Caco-2 (cell line): ENCODE measurements at regions of chr1 and their contacts with region 1.

Region 1: GRCh38 chr1:55021965-55022546 is 17.3 kb upstream of the PCSK9 start:
- DNase-seq: peak; percentile 84 to 88
- H3K4me3 ChIP-seq: no peak overlapping the region
- H3K4me3 Mint-ChIP-seq: no peak overlapping the region
- H3K27ac Mint-ChIP-seq: peak overlapping the region; percentile 34
- H3K4me1 ChIP-seq: peaks cover 7% of the 10 kb centered on the region
- H3K4me1 Mint-ChIP-seq: peaks cover 29% of the 10 kb centered on the region
- H3K27me3 ChIP-seq: no peaks in the 10 kb centered on the region
- H3K27me3 Mint-ChIP-seq: no peaks in the 10 kb centered on the region
- CTCF ChIP-seq: peak; percentile 76 to 80

Region 2: DNA sequence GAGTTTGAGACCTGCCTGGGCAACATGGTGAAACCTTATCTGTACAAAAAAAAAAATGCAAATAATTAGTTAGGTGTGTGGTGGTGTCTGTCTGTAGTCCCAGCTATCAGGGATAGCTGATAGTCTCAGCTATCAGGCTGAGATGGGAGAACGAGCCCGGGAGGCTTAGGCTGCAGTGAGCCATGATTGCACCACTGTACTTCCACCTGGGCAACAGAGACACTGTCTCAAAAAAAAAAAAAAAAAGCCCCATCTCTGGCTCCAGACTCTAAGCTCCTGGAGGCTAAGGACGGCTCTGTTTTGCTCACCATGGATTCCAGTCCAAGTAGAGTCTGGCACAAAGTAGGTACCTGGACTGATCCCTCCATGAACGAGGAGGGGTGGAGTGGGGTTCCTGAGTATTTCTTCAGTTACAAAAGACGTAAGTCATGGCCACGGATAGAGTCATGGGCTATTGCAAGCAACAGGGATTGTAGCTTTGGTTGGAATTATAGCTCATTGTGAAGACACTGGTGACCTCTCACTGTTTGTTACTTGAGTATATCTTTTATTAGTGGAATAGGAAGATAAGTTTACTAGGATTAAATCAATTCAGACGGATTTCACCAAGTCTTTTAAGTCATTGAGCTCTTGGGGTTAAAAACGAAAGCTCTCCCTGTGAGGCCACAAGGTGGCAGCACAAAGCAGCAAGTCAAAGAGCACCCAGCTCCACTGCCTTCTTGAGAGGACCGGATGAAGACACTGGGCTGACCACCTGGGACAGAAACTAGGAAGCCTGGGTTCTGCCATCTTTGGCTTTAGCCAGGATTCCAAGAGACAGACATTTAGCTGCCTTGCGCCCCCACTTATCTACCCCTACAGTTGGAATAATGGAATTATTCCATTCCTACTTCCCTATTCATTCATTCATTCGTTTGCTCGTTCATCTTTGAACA is 77.2 kb before region 1 on chr1:
- CTCF ChIA-PET with region 1: interaction called, 37 read pairs
- POLR2A ChIA-PET with region 1: interaction called, 3 read pairs
- intact Hi-C with region 1: loop called (anchors 1 kb)
- DNase-seq: peak; percentile 60 to 61
- H3K4me3 ChIP-seq: no peak overlapping the region
- H3K4me3 Mint-ChIP-seq: no peak overlapping the region
- H3K27ac Mint-ChIP-seq: no peak overlapping the region
- H3K4me1 ChIP-seq: peaks cover 7% of the 10 kb centered on the region; the same call in 1 of the 2 replicates
- H3K4me1 Mint-ChIP-seq: peaks cover 1% of the 10 kb centered on the region
- H3K27me3 ChIP-seq: no peaks in the 10 kb centered on the region
- H3K27me3 Mint-ChIP-seq: no peaks in the 10 kb centered on the region
- CTCF ChIP-seq: peak; percentile 51 to 53

Region 3: GRCh38 chr1:54950369-54951163 is 71.5 kb before region 1 on chr1:
- CTCF ChIA-PET with region 1: interaction called, 37 read pairs
- POLR2A ChIA-PET with region 1: interaction called, 4 read pairs
- intact Hi-C with region 1: loop called (anchors 1 kb)
- DNase-seq: peak; percentile 59 to 74
- H3K4me3 ChIP-seq: no peak overlapping the region
- H3K4me3 Mint-ChIP-seq: no peak overlapping the region
- H3K27ac Mint-ChIP-seq: peak overlapping the region; percentile 66
- H3K4me1 ChIP-seq: no peaks in the 10 kb centered on the region; the same call in 1 of the 2 replicates
- H3K4me1 Mint-ChIP-seq: peaks cover 18% of the 10 kb centered on the region
- H3K27me3 ChIP-seq: no peaks in the 10 kb centered on the region
- H3K27me3 Mint-ChIP-seq: no peaks in the 10 kb centered on the region
- CTCF ChIP-seq: peak; percentile 44 to 57

Region 4: GRCh38 chr1:54996359-54996868 is 25.6 kb before region 1 on chr1:
- CTCF ChIA-PET with region 1: interaction called, 7 read pairs
- POLR2A ChIA-PET with region 1: no interaction called
- intact Hi-C with region 1: loop called (anchors 1 kb)
- DNase-seq: peak; percentile 67 to 74
- H3K4me3 ChIP-seq: no peak overlapping the region
- H3K4me3 Mint-ChIP-seq: no peak overlapping the region
- H3K27ac Mint-ChIP-seq: no peak overlapping the region
- H3K4me1 ChIP-seq: no peaks in the 10 kb centered on the region
- H3K4me1 Mint-ChIP-seq: peaks cover 8% of the 10 kb centered on the region
- H3K27me3 ChIP-seq: no peaks in the 10 kb centered on the region
- H3K27me3 Mint-ChIP-seq: peaks cover 4% of the 10 kb centered on the region
- CTCF ChIP-seq: peak; percentile 60 to 66

Region 5: DNA sequence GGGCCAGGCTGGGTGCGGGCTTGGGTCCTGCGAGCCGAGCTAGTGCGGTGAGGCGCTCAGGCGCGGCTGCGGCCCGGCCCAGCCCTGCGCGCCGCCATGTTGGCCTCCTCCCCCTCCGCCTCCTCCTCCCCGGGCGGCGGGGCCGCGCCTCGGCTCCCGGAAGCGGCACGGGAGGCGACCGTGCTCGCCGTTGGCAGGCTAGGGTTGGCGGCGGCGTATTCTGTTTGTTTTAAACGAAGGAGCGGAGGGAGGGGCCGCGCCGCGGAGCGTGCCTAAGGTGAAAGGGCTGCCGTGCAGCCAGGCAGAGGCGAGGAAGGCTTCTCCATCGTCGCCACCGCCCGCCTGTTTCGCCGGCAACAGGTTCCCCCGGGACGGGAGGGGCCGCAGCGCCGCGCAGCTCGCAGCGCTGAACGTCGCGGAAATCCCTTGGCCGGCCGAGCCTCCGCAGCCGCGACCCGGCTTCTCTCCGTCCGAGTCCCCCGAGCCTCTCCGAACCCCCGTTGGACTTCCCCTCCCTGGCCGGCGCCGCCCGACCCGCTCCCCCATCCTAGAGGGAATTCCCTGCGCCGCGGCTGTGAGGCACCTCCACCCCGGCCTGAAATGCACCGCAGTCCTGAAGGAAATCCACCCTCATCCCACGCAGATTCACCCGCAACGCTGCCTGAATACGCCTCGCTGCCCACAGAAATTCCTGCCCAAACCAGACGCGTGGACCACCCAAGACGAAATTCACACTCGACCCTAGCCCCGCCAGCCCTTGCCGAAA is 193.4 kb after region 1 on chr1 and contains the start of gene USP24:
- CTCF ChIA-PET with region 1: no interaction called
- POLR2A ChIA-PET with region 1: no interaction called
- intact Hi-C with region 1: no loop called
- DNase-seq: peak; percentile 82 to 85
- H3K4me3 ChIP-seq: peak within 1 kb of the TSS; percentile 84
- H3K4me3 Mint-ChIP-seq: peak within 1 kb of the TSS; percentile 91
- H3K27ac Mint-ChIP-seq: peak within 1 kb of the TSS; percentile 100
- H3K4me1 ChIP-seq: peaks cover 26% of the 10 kb centered on the region
- H3K4me1 Mint-ChIP-seq: peaks cover 45% of the 10 kb centered on the region
- H3K27me3 ChIP-seq: no peaks in the 10 kb centered on the region
- H3K27me3 Mint-ChIP-seq: no peaks in the 10 kb centered on the region
- CTCF ChIP-seq: no peak
- total RNA-seq, gene USP24: 34.7 and 36.4 TPM in 2 replicates

Region 6: DNA sequence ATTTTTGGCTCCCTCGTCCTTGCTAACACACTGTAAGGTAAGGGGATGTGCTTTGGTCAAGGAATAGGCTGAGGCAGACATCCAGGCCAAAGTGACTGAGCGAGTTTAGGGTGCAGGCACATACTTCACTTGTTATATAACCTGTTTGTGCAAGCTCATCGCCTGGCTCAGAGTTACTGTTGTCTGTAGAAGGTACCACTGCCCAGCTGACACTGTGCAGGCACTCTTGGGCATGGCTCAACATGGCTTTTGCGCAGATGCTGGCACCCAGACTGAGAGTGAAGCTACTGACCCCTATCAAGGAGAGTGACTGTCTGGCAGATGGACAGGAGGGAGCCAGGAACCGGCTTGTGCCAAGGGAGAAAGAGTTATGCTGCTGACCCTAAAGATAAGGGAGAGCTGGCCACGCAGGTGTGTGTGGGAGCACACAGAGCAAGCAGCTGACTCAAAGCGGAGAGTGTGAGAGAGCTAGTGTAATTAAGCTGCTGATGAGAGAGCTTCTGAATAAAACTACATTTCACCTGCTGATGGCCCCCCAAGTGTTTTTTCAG is 500.4 kb after region 1 on chr1:
- CTCF ChIA-PET with region 1: no interaction called
- POLR2A ChIA-PET with region 1: no interaction called
- intact Hi-C with region 1: no loop called
- DNase-seq: no peak
- H3K4me3 ChIP-seq: no peak overlapping the region
- H3K4me3 Mint-ChIP-seq: no peak overlapping the region
- H3K27ac Mint-ChIP-seq: no peak overlapping the region
- H3K4me1 ChIP-seq: no peaks in the 10 kb centered on the region
- H3K4me1 Mint-ChIP-seq: no peaks in the 10 kb centered on the region
- H3K27me3 ChIP-seq: no peaks in the 10 kb centered on the region
- H3K27me3 Mint-ChIP-seq: no peaks in the 10 kb centered on the region
- CTCF ChIP-seq: no peak